ENCODE measurements at regions of chr3 and their contacts with region 1.

Region 1: GRCh38 chr3:169966428-169966950 is at the start of gene SEC62:
- DNase-seq: peak; percentile 94

Region 2: DNA sequence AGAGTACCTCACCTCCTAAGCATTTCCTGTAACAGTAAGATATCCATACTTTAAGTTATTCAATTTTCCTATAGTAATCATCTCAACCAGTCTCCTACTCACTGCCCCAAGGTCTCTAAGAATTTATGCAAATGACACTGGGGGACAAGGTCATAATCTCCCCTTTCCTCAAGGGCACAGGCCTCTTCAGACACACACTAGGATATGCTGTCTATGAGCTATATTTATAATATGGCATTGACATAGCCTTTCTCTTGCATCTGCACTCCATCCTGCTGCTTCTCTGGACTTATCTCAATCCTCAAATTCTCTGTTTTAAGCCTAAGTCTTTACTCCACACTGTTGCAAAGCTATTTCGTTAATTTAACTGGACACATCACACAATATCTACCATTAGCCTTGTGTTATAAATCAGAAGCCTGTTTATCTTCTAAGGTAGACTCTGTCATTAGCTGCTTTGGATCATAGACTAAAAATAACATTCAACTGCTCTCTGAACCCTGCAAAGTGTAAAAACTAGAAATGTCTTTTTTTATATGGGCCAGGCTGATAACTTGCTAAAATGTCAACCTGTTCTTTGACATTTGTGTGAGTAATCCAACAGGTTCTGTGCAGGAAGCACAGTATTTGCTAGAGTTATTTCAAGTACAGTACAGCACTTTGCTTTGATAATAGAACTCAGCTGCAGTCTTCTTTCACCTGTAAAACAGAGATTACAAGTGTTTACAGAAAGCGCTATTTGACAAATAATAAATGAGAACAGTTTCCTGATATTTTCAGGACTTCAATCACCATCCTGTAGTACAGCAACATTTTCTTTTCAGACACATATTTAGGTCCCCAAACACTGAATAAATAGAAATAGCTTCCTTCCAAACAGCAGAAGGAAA is 17.7 kb before region 1 on chr3:
- CTCF ChIA-PET with region 1: interaction called, 3 read pairs
- POLR2A ChIA-PET with region 1: interaction called, 11 read pairs
- DNase-seq: no peak

Measured in HEK293T (cell line).